ENCODE measurements at regions of chr21 and their contacts with region 1.

Region 1: DNA sequence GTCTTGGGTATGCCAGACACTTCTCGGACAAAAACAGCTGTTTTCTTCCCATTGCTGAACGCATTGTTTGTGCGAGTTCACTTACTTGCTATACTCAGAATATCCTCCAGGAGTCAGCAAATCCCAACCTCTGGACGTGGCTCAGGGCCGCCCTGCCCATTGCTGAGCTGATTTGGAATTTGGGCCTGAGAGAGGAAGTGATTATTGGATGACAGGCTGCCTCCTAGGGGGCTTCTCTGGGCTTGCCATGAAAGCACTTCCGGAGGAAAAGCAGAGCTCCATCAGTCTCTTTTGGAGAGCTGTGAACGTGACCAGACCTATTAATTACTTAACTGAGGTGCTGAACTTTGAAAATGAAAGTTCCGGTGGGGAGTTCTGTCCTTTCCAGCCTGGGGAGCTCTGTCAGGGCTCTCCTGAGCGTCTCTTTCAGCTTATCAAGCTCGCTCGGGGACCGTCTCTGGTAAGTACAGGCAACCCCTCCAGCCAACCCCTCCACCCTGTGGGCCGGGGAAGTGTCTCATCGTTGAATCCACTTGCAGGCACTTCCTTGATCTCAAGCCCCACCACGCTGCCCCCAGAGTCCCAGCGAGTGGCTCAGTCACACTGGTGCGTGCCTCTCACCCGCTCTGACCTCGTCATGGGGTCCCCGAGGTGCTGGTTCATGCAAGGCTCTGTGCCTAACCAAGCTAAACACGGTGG is 76.9 kb downstream of the CLIC6 start:
- DNase-seq: peak; percentile 46
- H3K4me3 Mint-ChIP-seq: peak overlapping the region; percentile 45
- H3K27ac Mint-ChIP-seq: no peak overlapping the region
- H3K4me1 Mint-ChIP-seq: peaks cover 8% of the 10 kb centered on the region
- H3K27me3 Mint-ChIP-seq: peaks cover 23% of the 10 kb centered on the region

Region 2: DNA sequence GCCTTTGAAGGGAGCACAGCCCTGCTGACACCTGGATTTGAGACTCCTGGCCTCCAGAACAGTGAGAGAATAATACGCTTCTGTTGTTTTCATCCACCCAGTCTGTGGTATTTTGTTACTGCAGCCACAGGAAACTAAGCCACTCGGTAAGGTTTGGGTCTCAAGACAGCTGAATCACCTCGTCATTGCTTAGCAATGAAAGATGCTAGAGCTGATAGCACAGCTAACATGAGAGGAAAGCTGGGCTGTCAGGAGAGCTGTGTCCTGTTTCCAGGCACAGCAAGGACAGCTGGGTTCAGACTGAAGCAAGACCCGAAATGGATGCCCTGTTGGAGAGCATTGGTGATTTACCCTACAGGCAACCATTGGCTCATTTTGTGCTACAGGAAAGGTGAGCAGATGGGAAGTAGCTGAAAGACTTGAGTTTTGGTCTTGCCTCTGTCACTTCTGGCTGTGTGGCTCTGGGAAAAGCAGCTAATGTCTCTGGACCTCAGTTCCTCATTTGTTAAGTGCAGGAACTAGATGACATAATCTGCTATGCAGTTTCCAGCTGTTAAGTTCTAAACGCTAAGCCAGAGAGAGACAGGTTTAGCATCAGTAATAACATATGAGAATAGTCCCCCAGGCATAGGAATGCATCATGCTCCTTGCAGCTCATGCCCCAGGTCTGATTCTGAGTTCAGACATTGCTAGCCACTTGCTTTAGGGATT is 18.9 kb before region 1 on chr21:
- intact Hi-C with region 1: no loop called
- DNase-seq: no peak
- H3K4me3 Mint-ChIP-seq: no peak overlapping the region
- H3K27ac Mint-ChIP-seq: no peak overlapping the region
- H3K4me1 Mint-ChIP-seq: peaks cover 28% of the 10 kb centered on the region
- H3K27me3 Mint-ChIP-seq: peaks cover 17% of the 10 kb centered on the region

Region 3: GRCh38 chr21:34845521-34846451 is 100.1 kb after region 1 on chr21:
- intact Hi-C with region 1: loop called (anchors 10 kb)
- DNase-seq: peak; percentile 70
- H3K4me3 Mint-ChIP-seq: peak overlapping the region; percentile 35
- H3K27ac Mint-ChIP-seq: peak overlapping the region; percentile 47
- H3K4me1 Mint-ChIP-seq: peaks cover 43% of the 10 kb centered on the region
- H3K27me3 Mint-ChIP-seq: no peaks in the 10 kb centered on the region

Region 4: DNA sequence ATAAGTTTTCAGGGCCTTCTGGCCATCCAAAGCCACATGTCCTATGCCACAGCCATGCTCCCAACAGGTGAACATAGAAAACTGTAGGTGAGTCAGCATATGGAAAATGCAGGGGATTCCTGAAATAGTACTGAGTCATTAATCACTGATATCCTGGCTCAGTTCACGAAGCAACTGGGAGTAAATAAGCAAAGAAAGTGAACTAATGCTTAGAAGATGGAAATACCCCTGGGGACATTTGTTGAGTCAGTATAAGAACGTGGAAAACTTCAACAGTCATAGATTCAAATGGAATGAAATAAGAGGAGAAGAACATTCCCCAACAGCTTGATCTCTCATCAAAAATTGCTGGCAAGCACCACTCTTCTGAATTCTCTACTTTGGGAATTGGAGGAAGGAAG is 452.3 kb after region 1 on chr21:
- intact Hi-C with region 1: no loop called
- DNase-seq: no peak
- H3K4me3 Mint-ChIP-seq: no peak overlapping the region
- H3K27ac Mint-ChIP-seq: peak overlapping the region; percentile 64
- H3K4me1 Mint-ChIP-seq: peaks cover 38% of the 10 kb centered on the region
- H3K27me3 Mint-ChIP-seq: no peaks in the 10 kb centered on the region

Region 5: GRCh38 chr21:35508139-35508888 is 762.6 kb after region 1 on chr21:
- intact Hi-C with region 1: loop called (anchors 1 kb)
- DNase-seq: no peak
- H3K4me3 Mint-ChIP-seq: no peak overlapping the region
- H3K27ac Mint-ChIP-seq: no peak overlapping the region
- H3K4me1 Mint-ChIP-seq: peaks cover 41% of the 10 kb centered on the region
- H3K27me3 Mint-ChIP-seq: no peaks in the 10 kb centered on the region

Region 6: GRCh38 chr21:35616090-35616489 is 870.4 kb after region 1 on chr21:
- intact Hi-C with region 1: loop called (anchors 2 kb)
- DNase-seq: no peak
- H3K4me3 Mint-ChIP-seq: no peak overlapping the region
- H3K27ac Mint-ChIP-seq: no peak overlapping the region
- H3K4me1 Mint-ChIP-seq: peaks cover 13% of the 10 kb centered on the region
- H3K27me3 Mint-ChIP-seq: peaks cover 19% of the 10 kb centered on the region

Region 7: DNA sequence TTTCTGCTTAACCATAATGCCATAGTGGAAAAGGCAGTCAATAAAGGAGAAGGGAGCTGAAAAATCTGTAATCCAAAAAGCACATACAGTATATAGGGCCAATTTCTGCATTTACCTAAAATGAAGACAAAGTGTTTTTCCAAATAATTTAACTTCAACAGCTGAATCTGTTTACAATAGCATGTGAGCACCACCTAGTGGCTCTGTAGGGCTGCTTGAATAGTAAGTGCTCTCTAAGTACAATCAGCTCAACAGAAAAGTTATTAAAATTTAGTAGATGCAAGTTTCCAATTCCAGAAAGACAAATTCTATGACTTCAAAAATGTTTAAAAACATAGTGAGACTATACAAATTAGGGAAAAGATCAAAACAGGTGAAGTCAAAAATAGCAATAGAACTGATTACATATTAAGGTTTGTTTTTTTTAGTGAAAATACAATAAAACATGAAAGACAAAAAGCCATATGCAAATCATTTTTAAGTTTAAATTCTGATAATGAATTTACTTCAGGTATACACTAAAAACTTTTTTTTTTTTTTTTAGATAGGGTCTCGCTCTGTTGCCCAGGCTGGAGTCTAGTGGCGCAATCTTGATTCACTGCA is 1094.6 kb after region 1 on chr21:
- intact Hi-C with region 1: loop called (anchors 1 kb)
- DNase-seq: peak; percentile 23
- H3K4me3 Mint-ChIP-seq: no peak overlapping the region
- H3K27ac Mint-ChIP-seq: no peak overlapping the region
- H3K4me1 Mint-ChIP-seq: no peaks in the 10 kb centered on the region
- H3K27me3 Mint-ChIP-seq: peaks cover 8% of the 10 kb centered on the region

Measured in activated T-helper 2 cell treated with anti-CD3 and anti-CD28 coated beads, Interferon-gamma antibody, Interleukin-2, Interleukin-4, amounts not matched to agents 10 μg/mL and 5 μg/mL and 100 μg/mL, durations not matched to agents 14 hours and 24 hours and 36 hours (primary cell).